ENCODE measurements at regions of chr12 and their contacts with region 1.

Region 1: GRCh38 chr12:56468216-56469006 is at the start of gene SPRYD4:
- DNase-seq: peak; percentile 82
- ATAC-seq: peak; percentile 84
- H3K4me3 ChIP-seq: peak within 1 kb of the TSS; percentile 74 to 99
- H3K27ac ChIP-seq: peak within 1 kb of the TSS; percentile 68
- H3K4me1 ChIP-seq: peaks cover 5 to 26% of the 10 kb centered on the region in 2 experiments
- H3K27me3 ChIP-seq: no peaks in the 10 kb centered on the region
- CTCF ChIP-seq: peak; percentile 15 to 43 (median 24); a peak in 2 of 6 replicates
- POLR2A ChIP-seq: peak; percentile 95
- RAD21 ChIP-seq: no peak
- total RNA-seq, gene SPRYD4: 2.5 TPM

Region 2: GRCh38 chr12:56206457-56207166 is 261.8 kb before region 1 on chr12:
- CTCF ChIA-PET with region 1: interaction called, 13 read pairs
- POLR2A ChIA-PET with region 1: no interaction called
- RAD21 ChIA-PET with region 1: interaction called in 1 of 2 experiments, 3 read pairs
- intact Hi-C with region 1: loop called (anchors 5 kb)
- DNase-seq: no peak
- ATAC-seq: peak; percentile 92
- H3K4me3 ChIP-seq: no peak overlapping the region
- H3K27ac ChIP-seq: no peak overlapping the region
- H3K4me1 ChIP-seq: no peaks in the 10 kb centered on the region
- H3K27me3 ChIP-seq: no peaks in the 10 kb centered on the region
- CTCF ChIP-seq: peak; percentile 69 to 82 (median 74); a peak in 5 of 6 replicates
- POLR2A ChIP-seq: no peak
- RAD21 ChIP-seq: peak; percentile 74

Region 3: DNA sequence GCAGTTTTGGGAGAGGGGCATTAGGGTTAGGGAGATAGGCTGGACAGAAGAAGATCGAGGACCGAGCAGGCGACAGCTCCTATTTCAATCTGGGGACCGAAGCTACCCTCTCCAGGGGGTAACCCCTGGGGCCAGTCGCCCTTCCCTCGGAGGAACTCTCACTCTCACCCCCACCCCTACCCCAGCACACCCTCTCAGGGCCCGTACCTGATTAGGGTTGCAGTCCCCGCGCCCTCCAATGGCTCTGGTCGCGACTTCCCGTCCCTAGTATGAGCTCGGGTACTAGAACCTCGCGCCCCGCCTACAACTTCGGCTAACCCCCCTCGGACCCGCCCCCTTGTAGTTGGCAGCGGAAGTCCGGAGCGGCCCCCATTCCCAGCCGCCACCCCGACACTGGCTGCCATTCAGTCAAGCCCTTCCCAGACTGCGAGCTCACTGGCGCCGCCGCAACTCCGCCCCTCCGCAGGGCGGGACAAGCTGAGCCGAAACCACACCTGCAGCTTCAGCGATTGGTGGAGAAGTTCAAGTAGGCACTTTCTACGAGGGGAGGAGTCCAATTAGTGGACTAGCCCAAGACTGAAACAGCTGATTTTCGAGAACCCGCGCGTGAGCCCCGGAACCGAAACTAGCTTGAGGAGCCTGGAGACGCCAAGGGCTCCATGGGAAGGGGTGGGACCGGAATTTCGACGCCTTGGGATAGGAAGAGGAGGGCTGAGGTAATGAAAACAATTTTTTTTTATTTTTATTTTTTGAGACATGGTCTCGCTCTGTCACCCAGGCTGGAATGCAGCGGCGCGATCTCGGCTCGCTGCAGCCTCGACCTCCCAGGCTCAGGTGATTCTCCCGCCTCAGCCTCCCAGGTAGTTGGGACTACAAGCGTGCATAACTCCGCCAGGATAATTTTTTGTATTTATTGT is 108.3 kb before region 1 on chr12 and contains the start of gene STAT2:
- CTCF ChIA-PET with region 1: interaction called, 14 read pairs
- POLR2A ChIA-PET with region 1: interaction called, 7 read pairs
- RAD21 ChIA-PET with region 1: no interaction called
- intact Hi-C with region 1: no loop called
- DNase-seq: peak; percentile 100
- ATAC-seq: peak; percentile 96
- H3K4me3 ChIP-seq: peak within 1 kb of the TSS; percentile 74 to 93
- H3K27ac ChIP-seq: peak within 1 kb of the TSS; percentile 74
- H3K4me1 ChIP-seq: peaks cover 10 to 18% of the 10 kb centered on the region in 2 experiments; a peak in 3 of 4 replicates
- H3K27me3 ChIP-seq: no peaks in the 10 kb centered on the region
- CTCF ChIP-seq: no peak
- POLR2A ChIP-seq: peak; percentile 50
- RAD21 ChIP-seq: no peak
- total RNA-seq, gene STAT2: 53.1 TPM

Region 4: DNA sequence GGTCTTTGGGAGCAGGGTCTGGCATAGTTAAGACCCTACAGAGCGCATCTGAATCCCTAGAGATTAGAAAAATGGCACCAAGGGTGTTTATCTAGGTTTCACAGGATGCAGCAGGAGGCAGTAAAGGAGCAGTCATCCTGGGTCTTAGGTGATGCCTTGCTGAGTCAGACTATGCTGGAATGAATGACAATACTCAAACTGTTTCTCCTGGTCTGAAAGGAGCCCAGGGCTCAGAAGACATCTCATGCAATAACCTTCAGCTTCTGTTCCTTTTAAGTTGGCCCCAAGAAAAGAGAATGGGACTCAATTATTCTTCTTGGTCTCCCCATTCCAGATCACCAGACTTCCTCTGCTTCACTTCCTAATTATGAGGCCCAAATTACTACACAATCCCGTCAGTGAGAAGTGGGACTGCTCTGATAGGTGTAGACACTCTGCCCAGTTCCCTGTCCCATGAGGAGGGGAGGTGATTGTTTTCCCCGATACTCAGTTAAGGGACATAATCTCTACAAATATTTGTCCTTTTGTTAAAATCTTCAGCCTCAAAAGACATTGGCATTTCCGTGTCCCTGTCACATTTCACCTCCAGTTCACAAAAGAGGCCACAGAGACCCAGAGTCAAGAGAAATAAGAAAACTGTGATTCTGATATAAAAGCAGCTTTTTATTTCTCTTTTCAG is 91.0 kb before region 1 on chr12:
- CTCF ChIA-PET with region 1: interaction called, 10 read pairs
- POLR2A ChIA-PET with region 1: no interaction called
- RAD21 ChIA-PET with region 1: no interaction called
- intact Hi-C with region 1: loop called (anchors 1 kb)
- DNase-seq: peak; percentile 12
- ATAC-seq: peak; percentile 70
- H3K4me3 ChIP-seq: no peak overlapping the region
- H3K27ac ChIP-seq: no peak overlapping the region
- H3K4me1 ChIP-seq: peaks cover 0 to 7% of the 10 kb centered on the region in 2 experiments; a peak in 1 of 4 replicates
- H3K27me3 ChIP-seq: no peaks in the 10 kb centered on the region
- CTCF ChIP-seq: peak in 2 of 3 experiments; percentile 26; a peak in 2 of 6 replicates
- POLR2A ChIP-seq: no peak
- RAD21 ChIP-seq: peak; percentile 65